Mammary epithelial cell (primary cell): ENCODE measurements at regions of chr14 and their contacts with region 1.

Region 1: DNA sequence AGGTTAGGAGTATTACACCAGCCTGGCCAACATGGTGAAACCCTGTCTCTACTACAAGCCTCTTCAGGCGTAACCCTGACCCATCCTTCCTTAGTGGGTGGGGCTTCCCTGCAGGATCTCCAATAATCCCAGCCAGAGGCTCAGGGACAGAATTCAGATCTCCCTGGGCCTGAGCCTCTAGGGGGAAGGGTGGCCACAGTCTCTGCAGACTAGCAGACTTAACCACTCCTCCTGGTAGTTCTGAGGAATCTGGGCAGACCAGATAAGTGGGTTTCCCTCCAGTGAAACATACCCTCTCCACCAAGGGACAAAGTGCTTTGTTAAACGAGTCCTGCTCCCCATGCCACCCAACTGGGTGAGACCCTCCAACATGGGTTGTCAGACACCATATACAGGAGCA is 36.6 kb upstream of the TRIM9 start:
- DNase-seq: no peak
- H3K4me3 ChIP-seq: no peak overlapping the region
- H3K27ac ChIP-seq: no peak overlapping the region
- H3K4me1 ChIP-seq: no peaks in the 10 kb centered on the region
- H3K27me3 ChIP-seq: no peaks in the 10 kb centered on the region
- CTCF ChIP-seq: no peak

Region 2: DNA sequence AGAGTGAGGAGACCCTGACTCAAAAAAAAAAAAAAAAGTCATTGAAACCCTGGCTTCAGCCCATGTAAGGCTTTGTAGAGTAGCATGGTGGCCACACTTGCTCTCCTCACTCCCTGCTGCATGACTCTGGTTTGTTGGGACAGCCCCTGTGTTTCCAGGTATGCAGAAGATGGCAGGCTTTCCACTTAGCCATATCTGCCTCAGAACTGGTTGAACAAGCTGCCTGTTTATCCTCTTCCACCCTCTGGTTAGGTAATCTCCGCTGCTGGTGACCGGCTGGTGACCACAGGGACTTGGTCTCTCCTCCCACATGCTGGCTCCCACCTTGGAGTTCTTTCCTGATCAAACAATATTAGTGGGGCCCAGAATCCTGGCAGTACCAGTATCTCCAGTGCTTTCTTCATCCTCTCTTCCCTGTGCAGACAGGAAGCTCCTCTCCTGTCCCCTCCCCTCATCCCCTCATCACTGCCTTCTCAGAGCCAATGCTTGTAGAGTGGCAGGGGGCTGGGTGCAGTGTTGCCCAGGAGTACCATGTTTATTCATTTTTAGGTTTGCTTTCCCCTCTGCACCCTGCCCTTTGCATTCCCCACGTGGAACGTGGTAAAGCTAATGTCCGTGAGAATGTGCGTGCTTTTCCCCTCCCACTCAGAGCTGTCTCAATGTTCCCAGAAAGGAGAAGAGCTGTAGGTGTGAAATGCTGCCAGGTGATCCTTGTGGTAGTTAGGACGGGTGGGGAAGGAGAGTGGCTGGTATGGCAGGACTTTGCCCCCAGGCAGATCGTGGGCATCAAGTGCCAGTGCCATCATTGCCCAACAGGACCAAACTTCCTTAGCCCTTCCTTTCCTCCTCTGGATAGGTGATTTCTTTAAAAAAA is 248.3 kb before region 1 on chr14:
- CTCF ChIA-PET with region 1: no interaction called
- dilution Hi-C with region 1: no loop called
- in situ Hi-C with region 1: no loop called
- intact Hi-C with region 1: no loop called
- DNase-seq: peak; percentile 33
- H3K4me3 ChIP-seq: no peak overlapping the region
- H3K27ac ChIP-seq: no peak overlapping the region
- H3K4me1 ChIP-seq: peaks cover 9% of the 10 kb centered on the region
- H3K27me3 ChIP-seq: no peaks in the 10 kb centered on the region
- CTCF ChIP-seq: no peak

Region 3: DNA sequence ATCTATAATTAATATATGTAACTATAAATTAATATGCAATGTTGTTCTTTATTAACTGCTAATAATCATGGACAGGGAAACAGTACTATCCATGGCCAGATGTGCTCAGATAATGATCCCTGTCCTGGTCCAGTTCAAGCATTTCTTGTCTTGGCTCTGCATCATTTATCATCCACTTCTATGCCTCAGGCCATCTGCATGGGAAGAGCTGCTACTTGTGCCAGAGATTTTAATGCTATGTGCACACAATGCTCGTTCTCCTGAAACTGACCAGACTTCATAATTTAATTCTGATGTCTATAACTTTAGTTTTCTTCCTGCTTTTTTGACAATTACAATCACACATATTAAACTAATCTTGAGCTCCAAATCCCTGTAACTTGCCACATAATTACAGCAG is 97.4 kb after region 1 on chr14:
- CTCF ChIA-PET with region 1: no interaction called
- dilution Hi-C with region 1: loop called (anchors 5 kb)
- in situ Hi-C with region 1: no loop called
- intact Hi-C with region 1: no loop called
- DNase-seq: no peak
- H3K4me3 ChIP-seq: no peak overlapping the region
- H3K27ac ChIP-seq: no peak overlapping the region
- H3K4me1 ChIP-seq: no peaks in the 10 kb centered on the region
- H3K27me3 ChIP-seq: no peaks in the 10 kb centered on the region
- CTCF ChIP-seq: no peak